Posterior vena cava (tissue), 2 donors: ENCODE measurements at regions of chr11 and their contacts with region 1.

Region 1: GRCh38 chr11:90722552-90723190 is 499.8 kb upstream of the CHORDC1 start:
- DNase-seq: no peak

Region 2: GRCh38 chr11:92136797-92137196 is 1414.1 kb after region 1 on chr11:
- intact Hi-C with region 1: loop called in 1 of 2 experiments (anchors 5 kb)
- DNase-seq: no peak